Activated CD4-positive, alpha-beta memory T cell treated with anti-CD3 and anti-CD28 coated beads for 36 hours (primary cell): ENCODE measurements at regions of chr6 and their contacts with region 1.

Region 1: GRCh38 chr6:117555882-117556498 is 46.3 kb downstream of the GOPC start:
- DNase-seq: peak; percentile 57
- H3K4me3 Mint-ChIP-seq: no peak overlapping the region
- H3K27ac Mint-ChIP-seq: no peak overlapping the region
- H3K4me1 Mint-ChIP-seq: peaks cover 2% of the 10 kb centered on the region
- H3K27me3 Mint-ChIP-seq: no peaks in the 10 kb centered on the region

Region 2: GRCh38 chr6:117167520-117168271 is 388.3 kb before region 1 on chr6:
- CTCF ChIA-PET with region 1: no interaction called
- POLR2A ChIA-PET with region 1: no interaction called
- intact Hi-C with region 1: no loop called
- DNase-seq: no peak
- H3K4me3 Mint-ChIP-seq: no peak overlapping the region
- H3K27ac Mint-ChIP-seq: no peak overlapping the region
- H3K4me1 Mint-ChIP-seq: no peaks in the 10 kb centered on the region
- H3K27me3 Mint-ChIP-seq: no peaks in the 10 kb centered on the region

Region 3: DNA sequence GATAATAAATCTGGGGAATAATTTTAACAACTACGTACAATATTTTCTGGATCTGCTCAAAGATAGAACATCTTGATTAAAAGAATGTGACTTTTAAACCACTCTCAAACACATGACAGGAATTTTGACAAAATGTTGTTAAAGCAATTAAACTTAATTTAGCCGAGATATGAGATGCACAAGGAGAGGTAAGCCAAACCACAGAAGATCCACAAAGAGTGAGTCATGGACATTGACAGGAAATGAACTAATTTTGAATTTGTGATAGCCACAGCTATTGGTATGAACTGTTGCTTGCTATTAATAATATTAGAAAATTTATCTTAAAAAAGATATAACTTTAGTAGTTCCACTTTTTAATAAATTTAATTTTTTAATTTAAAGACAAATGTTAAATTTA is 318.4 kb before region 1 on chr6:
- CTCF ChIA-PET with region 1: no interaction called
- POLR2A ChIA-PET with region 1: no interaction called
- intact Hi-C with region 1: no loop called
- DNase-seq: no peak
- H3K4me3 Mint-ChIP-seq: no peak overlapping the region
- H3K27ac Mint-ChIP-seq: no peak overlapping the region
- H3K4me1 Mint-ChIP-seq: no peaks in the 10 kb centered on the region
- H3K27me3 Mint-ChIP-seq: peaks cover 5% of the 10 kb centered on the region

Region 4: GRCh38 chr6:117346142-117346930 is 209.7 kb before region 1 on chr6:
- CTCF ChIA-PET with region 1: no interaction called
- POLR2A ChIA-PET with region 1: no interaction called
- intact Hi-C with region 1: loop called (anchors 2 kb)
- DNase-seq: no peak
- H3K4me3 Mint-ChIP-seq: no peak overlapping the region
- H3K27ac Mint-ChIP-seq: no peak overlapping the region
- H3K4me1 Mint-ChIP-seq: no peaks in the 10 kb centered on the region
- H3K27me3 Mint-ChIP-seq: peaks cover 3% of the 10 kb centered on the region

Region 5: GRCh38 chr6:117482240-117483003 is 73.6 kb before region 1 on chr6 and contains the start of gene DCBLD1:
- CTCF ChIA-PET with region 1: interaction called, 12 read pairs
- POLR2A ChIA-PET with region 1: no interaction called
- intact Hi-C with region 1: loop called (anchors 1 kb)
- DNase-seq: peak; percentile 74
- H3K4me3 Mint-ChIP-seq: peak within 1 kb of the TSS; percentile 82
- H3K27ac Mint-ChIP-seq: no peak within 1 kb of the TSS
- H3K4me1 Mint-ChIP-seq: peaks cover 12% of the 10 kb centered on the region
- H3K27me3 Mint-ChIP-seq: peaks cover 23% of the 10 kb centered on the region
- total RNA-seq, gene DCBLD1: 4.4 to 4.5 TPM

Region 6: GRCh38 chr6:117568831-117569410 is 12.9 kb after region 1 on chr6:
- CTCF ChIA-PET with region 1: interaction called, 10 read pairs
- POLR2A ChIA-PET with region 1: no interaction called
- intact Hi-C with region 1: no loop called
- DNase-seq: no peak
- H3K4me3 Mint-ChIP-seq: no peak overlapping the region
- H3K27ac Mint-ChIP-seq: no peak overlapping the region
- H3K4me1 Mint-ChIP-seq: peaks cover 17% of the 10 kb centered on the region
- H3K27me3 Mint-ChIP-seq: no peaks in the 10 kb centered on the region

Region 7: DNA sequence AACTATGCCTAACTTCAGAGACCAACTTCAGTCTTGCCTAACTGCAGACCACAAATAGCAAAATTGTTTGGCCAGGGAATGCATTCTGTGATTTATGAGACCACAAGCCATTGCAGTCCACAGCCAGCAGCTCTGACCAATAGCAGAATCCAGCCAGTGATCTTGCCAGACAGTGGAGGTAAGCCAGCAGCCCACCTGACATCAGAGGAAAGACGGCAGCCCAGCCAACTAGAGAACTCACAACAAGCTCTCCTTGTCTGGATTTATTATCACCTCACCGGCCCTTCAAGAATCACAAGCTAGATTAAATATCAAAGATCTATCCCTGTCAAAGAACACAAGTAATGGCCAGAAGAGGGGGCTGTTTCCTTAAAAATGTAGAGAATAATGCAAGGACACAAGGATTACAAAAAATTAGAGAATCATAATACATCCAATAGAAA is 284.6 kb after region 1 on chr6:
- CTCF ChIA-PET with region 1: no interaction called
- POLR2A ChIA-PET with region 1: no interaction called
- intact Hi-C with region 1: no loop called
- DNase-seq: no peak
- H3K4me3 Mint-ChIP-seq: no peak overlapping the region
- H3K27ac Mint-ChIP-seq: no peak overlapping the region
- H3K4me1 Mint-ChIP-seq: no peaks in the 10 kb centered on the region
- H3K27me3 Mint-ChIP-seq: no peaks in the 10 kb centered on the region